ENCODE measurements at regions of chr6 and their contacts with region 1.

Region 1: DNA sequence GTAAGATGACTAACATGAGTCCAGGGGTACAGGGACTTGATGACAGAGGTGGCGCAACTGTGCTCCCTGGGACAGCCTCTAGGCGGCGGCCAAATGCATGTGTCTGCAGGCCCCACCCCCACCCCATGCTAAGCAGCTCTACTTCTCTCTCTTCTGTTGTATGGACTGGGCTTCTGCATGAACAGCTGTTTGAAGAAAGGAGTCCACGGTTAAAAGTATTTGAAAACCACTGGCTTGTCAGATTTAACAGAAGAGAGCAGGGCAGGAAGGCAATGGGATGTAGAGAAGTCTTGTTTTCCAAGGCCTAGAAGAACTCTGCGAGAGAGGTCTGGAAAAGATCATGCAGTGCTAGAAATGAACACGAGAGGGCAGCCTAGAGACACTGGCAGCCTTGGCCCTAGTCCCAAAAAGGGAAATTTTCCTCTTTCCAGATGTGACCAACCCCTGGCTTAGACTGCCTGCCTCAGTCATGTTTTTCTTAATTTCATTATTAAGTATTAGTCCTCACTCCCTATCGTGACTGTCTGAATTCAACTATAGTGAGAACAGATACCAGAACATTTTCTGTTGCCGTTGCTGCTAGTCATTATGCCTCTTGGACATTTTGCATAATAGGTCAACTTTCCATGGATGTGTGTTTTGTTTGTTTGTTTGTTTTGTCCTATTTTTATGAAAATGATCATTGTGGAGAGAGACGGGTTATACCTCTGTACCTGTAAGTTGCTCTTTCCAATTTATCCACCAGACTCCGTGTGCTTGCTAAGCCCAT is 265.0 kb downstream of the ADGRG6 start:
- DNase-seq: peak; percentile 75
- ATAC-seq: peak; percentile 28
- H3K4me3 Mint-ChIP-seq: no peak overlapping the region
- H3K27ac Mint-ChIP-seq: no peak overlapping the region
- H3K4me1 Mint-ChIP-seq: peaks cover 68% of the 10 kb centered on the region
- H3K27me3 Mint-ChIP-seq: no peaks in the 10 kb centered on the region

Region 2: DNA sequence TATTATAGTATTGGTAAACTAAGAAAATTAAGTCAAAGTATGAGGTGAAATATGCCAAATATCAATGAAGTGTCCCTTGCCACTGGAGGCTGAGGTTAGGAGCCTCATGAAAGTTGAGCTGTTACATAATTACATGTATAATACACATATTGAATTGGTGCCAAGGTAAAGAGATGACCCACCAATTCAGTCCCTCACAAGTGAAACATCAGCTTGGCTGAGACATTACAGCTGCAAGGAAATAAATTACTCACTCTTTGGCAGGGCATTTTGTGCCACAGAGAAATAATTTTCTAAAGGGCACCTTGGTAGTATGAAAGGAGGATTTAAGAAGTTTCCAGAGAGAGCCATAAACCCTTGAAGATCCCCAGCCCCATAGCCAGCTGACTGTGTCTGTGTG is 137.6 kb before region 1 on chr6:
- CTCF ChIA-PET with region 1: no interaction called
- POLR2A ChIA-PET with region 1: no interaction called
- intact Hi-C with region 1: no loop called
- DNase-seq: no peak
- ATAC-seq: no peak
- H3K4me3 Mint-ChIP-seq: no peak overlapping the region
- H3K27ac Mint-ChIP-seq: no peak overlapping the region
- H3K4me1 Mint-ChIP-seq: no peaks in the 10 kb centered on the region
- H3K27me3 Mint-ChIP-seq: no peaks in the 10 kb centered on the region

Region 3: GRCh38 chr6:142474531-142475289 is 92.1 kb before region 1 on chr6:
- CTCF ChIA-PET with region 1: interaction called, 13 read pairs
- POLR2A ChIA-PET with region 1: no interaction called
- intact Hi-C with region 1: no loop called
- DNase-seq: peak; percentile 10
- ATAC-seq: no peak
- H3K4me3 Mint-ChIP-seq: no peak overlapping the region
- H3K27ac Mint-ChIP-seq: no peak overlapping the region
- H3K4me1 Mint-ChIP-seq: peaks cover 5% of the 10 kb centered on the region
- H3K27me3 Mint-ChIP-seq: no peaks in the 10 kb centered on the region

Region 4: DNA sequence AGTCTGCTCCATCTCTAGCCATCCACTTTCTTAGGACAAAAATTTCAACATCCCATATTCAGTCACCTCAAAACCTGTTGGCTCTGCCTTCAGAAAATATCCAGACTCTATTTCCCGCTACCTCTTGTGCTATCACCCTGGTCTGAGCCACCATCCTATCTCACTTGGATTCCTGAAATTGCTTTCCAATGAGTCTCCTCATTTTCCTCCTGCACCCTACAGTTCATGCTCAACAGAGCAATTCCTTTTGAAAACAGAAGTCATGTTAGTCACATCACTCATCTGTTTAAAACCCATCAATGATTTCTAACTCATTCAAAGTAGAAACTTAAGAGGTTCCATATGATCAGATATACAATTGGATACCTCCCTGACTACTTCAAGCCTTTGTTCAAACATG is 35.1 kb before region 1 on chr6:
- CTCF ChIA-PET with region 1: no interaction called
- POLR2A ChIA-PET with region 1: no interaction called
- intact Hi-C with region 1: no loop called
- DNase-seq: no peak
- ATAC-seq: no peak
- H3K4me3 Mint-ChIP-seq: no peak overlapping the region
- H3K27ac Mint-ChIP-seq: no peak overlapping the region
- H3K4me1 Mint-ChIP-seq: no peaks in the 10 kb centered on the region
- H3K27me3 Mint-ChIP-seq: peaks cover 2% of the 10 kb centered on the region

Region 5: GRCh38 chr6:142551274-142551811 is 15.5 kb before region 1 on chr6:
- CTCF ChIA-PET with region 1: interaction called, 30 read pairs
- POLR2A ChIA-PET with region 1: no interaction called
- intact Hi-C with region 1: no loop called
- DNase-seq: peak; percentile 82
- ATAC-seq: peak; percentile 98
- H3K4me3 Mint-ChIP-seq: no peak overlapping the region
- H3K27ac Mint-ChIP-seq: no peak overlapping the region
- H3K4me1 Mint-ChIP-seq: peaks cover 27% of the 10 kb centered on the region
- H3K27me3 Mint-ChIP-seq: peaks cover 6% of the 10 kb centered on the region

Region 6: GRCh38 chr6:142737368-142738034 is 170.7 kb after region 1 on chr6:
- CTCF ChIA-PET with region 1: no interaction called
- POLR2A ChIA-PET with region 1: no interaction called
- intact Hi-C with region 1: no loop called
- DNase-seq: peak; percentile 31
- ATAC-seq: peak; percentile 76
- H3K4me3 Mint-ChIP-seq: no peak overlapping the region
- H3K27ac Mint-ChIP-seq: peak overlapping the region; percentile 82
- H3K4me1 Mint-ChIP-seq: peaks cover 14% of the 10 kb centered on the region
- H3K27me3 Mint-ChIP-seq: no peaks in the 10 kb centered on the region

Region 7: GRCh38 chr6:142842418-142843261 is 275.8 kb after region 1 on chr6:
- CTCF ChIA-PET with region 1: no interaction called
- POLR2A ChIA-PET with region 1: no interaction called
- intact Hi-C with region 1: loop called in 1 of 2 experiments (anchors 5 kb)
- DNase-seq: peak; percentile 66
- ATAC-seq: peak; percentile 80
- H3K4me3 Mint-ChIP-seq: peak overlapping the region; percentile 71
- H3K27ac Mint-ChIP-seq: peak overlapping the region; percentile 97
- H3K4me1 Mint-ChIP-seq: peaks cover 89% of the 10 kb centered on the region
- H3K27me3 Mint-ChIP-seq: no peaks in the 10 kb centered on the region

Region 8: DNA sequence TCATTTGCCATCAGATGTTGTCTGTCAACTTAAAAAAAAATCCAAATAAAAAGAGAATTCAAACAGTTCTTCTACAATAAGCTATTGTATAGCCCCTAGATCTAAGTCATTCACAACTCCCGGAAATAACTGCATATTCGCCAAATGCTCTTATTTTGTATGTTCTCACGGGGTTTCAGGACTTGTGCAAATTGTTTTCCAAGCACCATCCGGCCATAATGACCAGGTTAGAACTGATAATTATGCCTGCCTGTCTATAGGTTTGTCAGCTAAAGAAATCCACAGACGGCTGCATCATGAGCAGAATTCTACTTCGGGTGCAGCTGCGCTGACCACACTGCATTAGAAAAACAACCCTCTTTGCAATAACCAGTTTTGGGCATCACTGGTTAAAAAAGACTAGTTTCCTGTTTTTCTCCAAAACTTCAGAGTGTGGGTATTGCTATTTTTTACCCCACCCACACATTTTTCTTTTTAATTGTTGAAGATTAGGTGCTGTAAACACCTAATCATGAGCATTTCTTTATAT is 290.5 kb after region 1 on chr6:
- CTCF ChIA-PET with region 1: no interaction called
- POLR2A ChIA-PET with region 1: no interaction called
- intact Hi-C with region 1: loop called (anchors 5 to 10 kb)
- DNase-seq: no peak
- ATAC-seq: no peak
- H3K4me3 Mint-ChIP-seq: peak overlapping the region; percentile 60
- H3K27ac Mint-ChIP-seq: peak overlapping the region; percentile 90
- H3K4me1 Mint-ChIP-seq: peaks cover 92% of the 10 kb centered on the region
- H3K27me3 Mint-ChIP-seq: no peaks in the 10 kb centered on the region

Region 9: DNA sequence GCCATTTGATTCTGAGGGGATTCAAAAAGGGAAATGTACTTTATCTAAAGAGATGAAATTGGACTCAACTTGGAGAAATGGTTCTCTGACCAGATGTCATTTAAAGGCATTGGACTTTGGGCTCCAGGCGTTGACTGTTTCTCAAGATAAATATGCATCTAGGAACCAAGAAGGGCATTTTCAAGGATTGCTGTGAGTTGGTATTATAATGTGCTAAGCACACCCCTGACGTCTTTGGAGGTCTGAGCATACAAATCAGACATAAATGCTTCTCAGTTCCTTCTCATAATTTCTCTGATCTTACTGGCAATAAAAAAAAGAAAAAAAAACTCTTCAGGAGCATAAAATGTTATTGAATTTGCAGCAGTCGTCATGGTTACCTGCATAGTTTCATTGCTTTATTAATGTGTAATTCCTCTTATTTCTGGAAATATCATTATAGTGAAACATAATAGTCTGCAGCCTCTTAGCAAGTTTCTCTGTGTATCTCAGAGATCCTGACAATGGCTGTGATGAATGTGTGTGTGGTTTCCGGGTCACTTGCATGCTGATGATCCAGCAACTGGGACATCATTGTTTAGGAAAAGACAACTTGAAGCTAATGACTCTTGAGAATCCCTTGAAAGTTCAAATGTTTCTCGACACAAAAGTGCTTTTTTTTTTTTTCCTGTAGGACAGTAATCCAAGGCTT is 629.9 kb after region 1 on chr6:
- CTCF ChIA-PET with region 1: no interaction called
- POLR2A ChIA-PET with region 1: no interaction called
- intact Hi-C with region 1: no loop called
- DNase-seq: no peak
- ATAC-seq: no peak
- H3K4me3 Mint-ChIP-seq: no peak overlapping the region
- H3K27ac Mint-ChIP-seq: no peak overlapping the region
- H3K4me1 Mint-ChIP-seq: peaks cover 20% of the 10 kb centered on the region
- H3K27me3 Mint-ChIP-seq: no peaks in the 10 kb centered on the region

Region 10: DNA sequence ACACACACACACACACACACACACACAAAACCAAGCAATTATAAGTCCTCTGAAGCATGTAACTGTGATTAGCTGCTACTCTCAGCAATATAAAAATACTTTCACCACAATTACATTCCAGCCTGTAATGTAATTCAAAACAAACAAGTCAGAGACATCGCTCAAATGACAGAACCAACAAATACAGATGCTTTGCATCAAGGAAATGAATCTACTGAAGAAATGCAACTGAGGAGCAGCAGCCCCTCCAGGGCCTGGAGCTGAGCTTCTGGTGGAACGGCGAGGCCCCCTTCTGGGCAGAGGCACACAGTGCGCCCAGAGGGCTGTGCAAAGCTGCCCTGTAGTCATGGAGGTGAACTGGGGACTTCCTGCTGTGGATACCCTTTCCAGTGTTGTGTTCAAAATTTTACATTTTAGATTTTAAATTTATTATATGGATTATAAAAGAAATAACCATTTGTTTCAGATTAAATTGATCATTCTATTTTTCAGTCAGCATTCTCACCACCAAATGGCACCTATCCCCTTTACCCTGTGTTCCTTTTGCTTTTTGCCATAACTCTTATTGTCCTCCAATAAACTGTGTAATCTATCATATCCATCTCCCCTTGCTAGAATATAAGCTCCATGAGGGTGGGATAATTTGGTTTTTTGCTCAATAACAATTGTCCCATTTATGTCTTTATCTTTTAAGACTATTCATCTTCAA is 860.5 kb after region 1 on chr6:
- CTCF ChIA-PET with region 1: interaction called, 6 read pairs
- POLR2A ChIA-PET with region 1: no interaction called
- intact Hi-C with region 1: loop called (anchors 1 to 2 kb)
- DNase-seq: peak; percentile 86
- ATAC-seq: peak; percentile 100
- H3K4me3 Mint-ChIP-seq: no peak overlapping the region
- H3K27ac Mint-ChIP-seq: no peak overlapping the region
- H3K4me1 Mint-ChIP-seq: peaks cover 7% of the 10 kb centered on the region
- H3K27me3 Mint-ChIP-seq: no peaks in the 10 kb centered on the region